GM13976 (cell line): ENCODE measurements at regions of chr13 and their contacts with region 1.

Region 1: DNA sequence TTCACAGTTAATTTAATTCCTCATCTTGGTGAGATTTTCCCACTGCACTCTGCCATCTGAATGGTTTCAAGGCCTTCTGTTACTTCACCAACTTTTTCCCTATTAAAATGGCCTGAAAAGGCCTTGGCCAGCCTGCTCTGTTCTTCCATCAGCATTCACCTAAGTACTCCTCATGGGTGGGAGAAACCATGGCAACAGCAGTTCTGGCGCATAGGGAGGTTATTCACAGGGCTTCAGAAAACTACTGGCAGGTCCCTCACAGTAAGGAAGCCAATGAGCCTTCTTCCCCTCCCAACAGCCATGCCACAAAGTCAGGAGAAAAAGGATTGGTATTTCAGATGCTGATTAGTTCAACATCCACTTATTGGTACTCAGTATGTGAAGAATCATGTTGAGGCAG is 17.2 kb upstream of the GJB2 start:
- DNase-seq: no peak
- CTCF ChIP-seq: no peak

Region 2: DNA sequence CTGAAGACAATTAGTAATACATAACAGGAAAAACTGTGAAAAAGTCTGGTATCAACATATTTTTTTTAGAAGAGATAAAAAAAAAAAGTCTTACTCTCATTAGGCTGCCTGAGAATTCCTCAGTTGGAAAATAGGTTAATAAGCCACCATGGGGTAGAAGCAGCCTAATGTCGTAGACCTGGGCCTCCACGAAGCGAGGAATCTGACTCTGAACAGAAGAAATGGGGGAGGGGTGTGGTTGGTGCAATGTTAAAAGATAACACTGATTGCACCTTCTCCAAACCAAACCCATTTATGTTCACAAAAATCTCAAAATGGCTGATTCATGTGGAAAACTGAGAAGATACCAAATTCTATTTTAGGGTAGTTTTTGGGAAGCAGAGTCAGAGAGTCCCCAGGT is 514.1 kb before region 1 on chr13:
- in situ Hi-C with region 1: no loop called
- DNase-seq: no peak
- CTCF ChIP-seq: no peak

Region 3: GRCh38 chr13:20264271-20265018 is 54.5 kb after region 1 on chr13:
- in situ Hi-C with region 1: loop called (anchors 10 kb)
- DNase-seq: no peak
- CTCF ChIP-seq: no peak